Endothelial cell of umbilical vein (primary cell): ENCODE measurements at regions of chr17 and their contacts with region 1.

Region 1: GRCh38 chr17:50547035-50547735 is at the start of gene SPATA20:
- DNase-seq: peak; percentile 84
- H3K4me3 ChIP-seq: peak within 1 kb of the TSS; percentile 27 to 58 (median 46)
- H3K27ac ChIP-seq: peak within 1 kb of the TSS; percentile 47
- H3K4me1 ChIP-seq: peaks cover 12% of the 10 kb centered on the region
- H3K27me3 ChIP-seq: no peaks in the 10 kb centered on the region
- CTCF ChIP-seq: peak; percentile 95 to 99
- POLR2A ChIP-seq: peak; percentile 92
- total RNA-seq, gene SPATA20: 31.4 and 42.3 TPM in 2 replicates

Region 2: DNA sequence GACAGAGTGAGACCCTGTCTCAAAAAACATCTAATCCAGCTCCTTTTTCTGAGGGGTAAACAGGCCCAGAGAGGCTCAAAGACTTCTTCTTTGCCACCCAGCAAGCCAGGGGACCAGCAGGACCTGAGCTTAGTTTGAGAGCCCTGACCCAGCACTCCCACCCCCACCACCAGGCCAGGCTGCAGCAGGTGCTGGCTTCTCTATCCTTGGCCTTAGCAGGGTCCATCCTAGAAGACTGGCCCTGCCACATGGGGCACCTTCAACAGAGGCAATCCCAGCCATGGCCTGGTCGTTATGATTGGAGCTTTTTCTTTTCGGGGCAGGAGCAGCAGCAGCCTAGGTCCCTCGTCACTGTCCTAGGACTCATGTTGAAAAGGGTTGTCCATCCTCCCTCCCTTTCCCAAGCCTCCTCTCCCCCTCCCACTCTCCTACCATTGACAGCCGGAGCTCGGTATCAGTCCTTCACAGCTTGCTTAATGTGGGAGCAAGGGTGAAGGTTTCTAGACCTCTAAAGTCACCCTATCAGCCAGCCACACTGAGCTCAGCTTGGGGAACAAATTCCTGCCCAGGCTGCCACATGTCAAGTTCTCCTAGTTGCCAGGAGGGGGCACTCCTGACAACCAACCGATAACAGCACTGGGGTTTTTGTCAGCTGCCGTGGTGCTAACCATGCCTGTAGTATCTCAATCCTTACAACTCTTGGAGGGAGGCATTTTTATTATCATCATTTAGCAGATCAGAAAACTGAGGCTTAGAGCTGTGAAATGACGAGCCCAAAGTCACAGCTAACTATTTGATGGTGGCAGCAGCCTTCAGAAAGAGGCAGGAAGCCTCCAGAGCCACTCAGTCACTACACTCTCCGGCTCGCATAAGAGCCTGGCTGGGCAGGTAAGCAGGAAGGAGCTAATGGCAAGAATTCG is 185.4 kb before region 1 on chr17:
- CTCF ChIA-PET with region 1: no interaction called
- POLR2A ChIA-PET with region 1: no interaction called
- dilution Hi-C with region 1: no loop called
- intact Hi-C with region 1: no loop called
- DNase-seq: peak; percentile 61
- H3K4me3 ChIP-seq: no peak overlapping the region
- H3K27ac ChIP-seq: no peak overlapping the region
- H3K4me1 ChIP-seq: no peaks in the 10 kb centered on the region
- H3K27me3 ChIP-seq: no peaks in the 10 kb centered on the region
- CTCF ChIP-seq: peak; percentile 77 to 84
- POLR2A ChIP-seq: no peak

Region 3: GRCh38 chr17:50518384-50519230 is 28.6 kb before region 1 on chr17:
- CTCF ChIA-PET with region 1: no interaction called
- POLR2A ChIA-PET with region 1: no interaction called
- dilution Hi-C with region 1: no loop called
- intact Hi-C with region 1: no loop called
- DNase-seq: no peak
- H3K4me3 ChIP-seq: no peak overlapping the region
- H3K27ac ChIP-seq: no peak overlapping the region
- H3K4me1 ChIP-seq: peaks cover 9% of the 10 kb centered on the region
- H3K27me3 ChIP-seq: no peaks in the 10 kb centered on the region
- CTCF ChIP-seq: no peak
- POLR2A ChIP-seq: no peak

Region 4: DNA sequence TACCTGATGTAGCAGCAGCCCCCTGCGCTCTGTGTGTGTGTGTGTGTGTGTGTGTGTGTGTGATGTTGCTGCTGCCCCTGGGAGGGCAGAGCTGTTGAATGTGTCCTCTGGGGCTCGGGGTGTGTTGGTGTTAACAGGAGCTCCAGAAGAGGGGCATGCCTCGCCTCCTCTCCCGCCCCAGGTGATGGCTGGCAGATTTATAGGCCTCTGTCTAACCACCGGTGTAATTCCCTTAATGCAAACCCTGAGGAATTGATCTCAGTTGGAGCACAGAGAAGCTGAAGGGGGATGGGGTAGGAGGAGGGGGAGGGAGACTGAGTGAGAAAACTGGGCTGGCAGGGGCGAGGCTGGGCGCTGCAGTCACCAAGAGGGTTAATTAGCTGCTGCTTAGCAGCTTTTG is 23.3 kb after region 1 on chr17:
- CTCF ChIA-PET with region 1: interaction called, 10 read pairs
- POLR2A ChIA-PET with region 1: no interaction called
- dilution Hi-C with region 1: no loop called
- intact Hi-C with region 1: no loop called
- DNase-seq: no peak
- H3K4me3 ChIP-seq: no peak overlapping the region
- H3K27ac ChIP-seq: no peak overlapping the region
- H3K4me1 ChIP-seq: no peaks in the 10 kb centered on the region
- H3K27me3 ChIP-seq: peaks cover 7 to 11% of the 10 kb centered on the region in 2 experiments
- CTCF ChIP-seq: no peak
- POLR2A ChIP-seq: no peak

Region 5: GRCh38 chr17:50613007-50613992 is 66.1 kb after region 1 on chr17:
- CTCF ChIA-PET with region 1: interaction called, 18 read pairs
- POLR2A ChIA-PET with region 1: no interaction called
- dilution Hi-C with region 1: no loop called
- intact Hi-C with region 1: no loop called
- DNase-seq: peak; percentile 20
- H3K4me3 ChIP-seq: no peak overlapping the region
- H3K27ac ChIP-seq: no peak overlapping the region
- H3K4me1 ChIP-seq: no peaks in the 10 kb centered on the region
- H3K27me3 ChIP-seq: no peaks in the 10 kb centered on the region
- CTCF ChIP-seq: peak in 1 of 2 donors; percentile 22
- POLR2A ChIP-seq: no peak

Region 6: GRCh38 chr17:50638851-50639767 is 91.9 kb after region 1 on chr17:
- CTCF ChIA-PET with region 1: interaction called, 21 read pairs
- POLR2A ChIA-PET with region 1: no interaction called
- dilution Hi-C with region 1: no loop called
- intact Hi-C with region 1: no loop called
- DNase-seq: peak; percentile 93
- H3K4me3 ChIP-seq: no peak overlapping the region
- H3K27ac ChIP-seq: peak overlapping the region; percentile 72
- H3K4me1 ChIP-seq: peaks cover 46% of the 10 kb centered on the region
- H3K27me3 ChIP-seq: no peaks in the 10 kb centered on the region
- CTCF ChIP-seq: no peak
- POLR2A ChIP-seq: no peak

Region 7: DNA sequence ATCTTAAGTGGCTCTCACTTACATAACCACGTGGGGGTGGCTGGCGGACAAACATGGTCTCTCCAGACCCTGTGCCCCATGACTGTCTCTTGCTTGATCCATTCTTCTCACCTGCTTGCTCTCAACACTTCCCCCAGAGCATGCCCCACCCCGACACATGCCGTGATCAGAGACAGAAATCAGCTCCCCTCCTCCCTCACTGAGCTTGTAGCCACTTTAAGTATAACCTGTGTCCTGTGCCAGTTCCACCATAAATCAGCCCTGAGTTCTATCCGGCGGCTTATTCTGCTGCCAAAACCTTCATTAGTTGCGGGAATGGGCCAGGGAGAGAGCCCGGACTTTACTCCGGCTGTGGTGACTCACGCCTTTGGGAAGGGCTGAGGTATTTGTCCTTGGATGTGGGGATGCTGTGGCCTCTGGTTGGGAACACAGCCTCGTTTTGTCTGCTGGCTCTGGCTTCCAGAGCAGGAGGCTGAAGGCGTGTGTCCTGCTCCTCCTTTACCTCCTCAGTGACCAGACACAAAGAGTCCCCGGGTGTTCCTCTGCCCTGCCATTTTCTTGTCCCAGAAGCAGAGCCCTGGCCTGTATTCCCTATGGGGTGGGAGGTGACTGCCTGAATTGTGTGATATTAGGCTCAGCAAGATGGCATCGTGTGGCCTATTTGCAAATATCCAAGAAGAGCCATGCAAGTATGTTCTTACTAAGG is 139.5 kb after region 1 on chr17:
- CTCF ChIA-PET with region 1: interaction called, 150 read pairs
- POLR2A ChIA-PET with region 1: no interaction called
- dilution Hi-C with region 1: no loop called
- intact Hi-C with region 1: loop called (anchors 1 kb)
- DNase-seq: peak; percentile 28
- H3K4me3 ChIP-seq: no peak overlapping the region
- H3K27ac ChIP-seq: no peak overlapping the region
- H3K4me1 ChIP-seq: peaks cover 3% of the 10 kb centered on the region
- H3K27me3 ChIP-seq: no peaks in the 10 kb centered on the region
- CTCF ChIP-seq: no peak
- POLR2A ChIP-seq: no peak

Region 8: DNA sequence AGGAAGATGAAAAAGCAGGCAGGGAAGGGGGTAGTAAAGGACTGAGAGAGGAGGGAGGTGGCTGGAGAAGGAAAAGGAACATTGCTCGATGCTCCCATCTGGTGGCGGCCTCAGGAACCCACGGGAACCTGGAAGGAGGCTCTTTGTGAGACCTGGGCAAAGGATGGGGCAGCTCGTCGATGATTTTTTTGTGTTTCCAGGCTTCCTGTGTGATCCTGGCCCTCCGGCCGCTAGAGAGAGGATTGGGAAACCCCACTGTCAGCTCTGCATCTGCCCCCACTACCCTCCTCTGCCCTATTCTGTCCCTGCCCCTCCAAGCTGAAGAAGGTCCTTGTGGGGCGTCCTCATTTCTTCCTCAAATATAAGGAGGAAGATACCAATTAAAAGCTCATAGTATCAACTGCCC is 294.8 kb after region 1 on chr17:
- CTCF ChIA-PET with region 1: interaction called, 5 read pairs
- POLR2A ChIA-PET with region 1: no interaction called
- dilution Hi-C with region 1: no loop called
- intact Hi-C with region 1: loop called (anchors 1 kb)
- DNase-seq: peak; percentile 58
- H3K4me3 ChIP-seq: no peak overlapping the region
- H3K27ac ChIP-seq: no peak overlapping the region
- H3K4me1 ChIP-seq: no peaks in the 10 kb centered on the region
- H3K27me3 ChIP-seq: no peaks in the 10 kb centered on the region
- CTCF ChIP-seq: peak; percentile 79 to 90
- POLR2A ChIP-seq: no peak